Heart right ventricle (tissue), 16 donors: ENCODE measurements at regions of chr18 and their contacts with region 1.

Region 1: GRCh38 chr18:35497370-35498197 is at the start of gene INO80C:
- DNase-seq: peak; percentile 93 to 94
- ATAC-seq: peak; percentile 98 to 99 (median 99)
- H3K4me3 ChIP-seq: peak within 1 kb of the TSS; percentile 4 to 69 (median 64)
- H3K27ac ChIP-seq: peak within 1 kb of the TSS; percentile 88 to 97 (median 95)
- H3K4me1 ChIP-seq: peaks cover 0 to 30% (median 18%) of the 10 kb centered on the region in 9 donors
- H3K27me3 ChIP-seq: no peaks in the 10 kb centered on the region
- CTCF ChIP-seq: no peak
- total RNA-seq, gene INO80C: 19.5 to 28.4 (median 25.5) TPM

Region 2: DNA sequence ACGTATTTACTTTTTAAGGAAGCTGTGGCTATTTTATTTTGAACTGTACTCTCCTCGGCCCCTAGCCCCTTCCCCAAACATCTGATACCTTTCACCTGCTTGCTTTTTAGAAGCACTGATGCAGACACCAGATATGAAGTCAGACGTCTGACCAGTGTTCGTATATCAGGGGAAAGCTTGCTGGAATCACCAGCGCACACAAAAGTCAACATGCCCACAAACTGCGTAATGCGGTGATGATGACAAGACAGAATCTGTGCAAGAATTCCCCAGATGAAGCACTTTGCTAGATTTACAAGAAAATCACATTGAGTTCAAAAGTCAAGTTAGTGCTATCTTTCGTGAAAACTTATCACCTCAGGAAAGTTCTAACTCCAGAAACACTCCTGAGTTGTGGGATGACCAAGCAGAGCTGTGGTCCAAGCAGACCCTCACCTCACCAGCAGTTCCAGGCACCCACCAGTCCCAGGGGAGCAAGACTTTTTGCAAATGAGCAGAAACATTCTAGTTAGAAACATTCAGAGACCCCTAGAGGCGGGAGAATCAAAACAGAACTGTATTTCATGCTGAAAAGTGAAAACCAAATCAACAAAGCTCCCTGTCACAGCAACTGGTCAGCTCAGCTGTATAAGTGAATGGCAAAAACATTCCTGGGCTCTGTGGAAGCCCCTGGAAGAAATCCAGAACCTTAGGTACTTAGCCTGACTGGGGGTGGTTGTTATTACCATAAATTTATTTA is 55.6 kb before region 1 on chr18:
- intact Hi-C with region 1: loop called in 1 of 10 experiments (anchors 10 kb)
- DNase-seq: no peak
- ATAC-seq: no peak
- H3K4me3 ChIP-seq: no peak overlapping the region
- H3K27ac ChIP-seq: no peak overlapping the region
- H3K4me1 ChIP-seq: peaks cover 0 to 23% (median 3%) of the 10 kb centered on the region in 9 donors
- H3K27me3 ChIP-seq: no peaks in the 10 kb centered on the region
- CTCF ChIP-seq: no peak